ENCODE measurements at regions of chr15 and their contacts with region 1.

Region 1: DNA sequence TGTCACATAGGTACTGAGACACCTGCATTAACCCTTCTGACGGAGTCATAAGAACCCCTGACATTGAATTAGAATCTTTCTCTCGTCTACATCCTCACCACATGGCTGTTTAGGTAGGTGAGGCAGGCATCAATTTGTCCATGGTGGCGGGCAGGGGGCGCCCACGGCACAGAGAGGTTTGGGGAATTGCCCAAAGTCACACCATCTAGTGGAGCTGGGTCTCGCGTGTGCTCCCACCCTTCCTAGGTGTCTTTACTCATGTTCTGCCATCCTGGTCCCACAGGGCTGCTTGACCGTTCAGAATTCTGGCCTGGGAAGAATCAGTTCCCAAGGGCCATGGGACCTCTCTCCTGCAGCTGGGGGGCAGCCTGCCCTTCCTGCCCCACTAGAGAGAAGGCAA is 14.7 kb upstream of the DLL4 start:
- DNase-seq: no peak
- H3K4me3 ChIP-seq: no peak overlapping the region
- CTCF ChIP-seq: no peak

Region 2: DNA sequence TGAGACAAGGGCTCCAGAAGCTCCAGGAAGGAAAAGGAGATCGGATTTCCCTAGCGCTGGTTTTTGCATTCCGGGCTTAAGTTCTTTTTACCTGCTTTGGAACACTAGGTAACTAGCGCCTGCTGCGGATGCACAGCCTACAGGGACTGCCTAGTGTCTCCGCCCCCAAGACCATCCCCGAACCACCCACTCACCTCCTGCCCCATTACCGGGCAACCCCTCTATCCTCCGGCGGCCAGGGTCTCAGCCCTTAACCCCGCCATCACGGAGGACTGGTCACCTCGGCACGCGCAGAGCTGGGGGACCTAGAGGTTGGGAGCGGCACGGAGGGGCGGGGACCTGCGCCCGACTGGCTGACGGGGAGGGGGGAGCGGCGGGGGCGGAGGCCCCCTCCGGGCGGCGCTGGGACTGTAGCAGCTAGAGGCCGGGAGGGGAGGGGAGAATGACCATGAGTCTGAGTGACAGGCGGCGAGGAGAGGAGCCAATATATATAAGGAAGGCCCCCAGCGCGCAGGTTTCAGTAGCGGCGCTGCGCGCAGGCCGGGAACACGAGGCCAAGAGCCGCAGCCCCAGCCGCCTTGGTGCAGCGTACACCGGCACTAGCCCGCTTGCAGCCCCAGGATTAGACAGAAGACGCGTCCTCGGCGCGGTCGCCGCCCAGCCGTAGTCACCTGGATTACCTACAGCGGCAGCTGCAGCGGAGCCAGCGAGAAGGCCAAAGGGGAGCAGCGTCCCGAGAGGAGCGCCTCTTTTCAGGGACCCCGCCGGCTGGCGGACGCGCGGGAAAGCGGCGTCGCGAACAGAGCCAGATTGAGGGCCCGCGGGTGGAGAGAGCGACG is 14.6 kb after region 1 on chr15 and contains the start of gene DLL4:
- CTCF ChIA-PET with region 1: interaction called, 109 read pairs
- POLR2A ChIA-PET with region 1: no interaction called
- DNase-seq: no peak
- H3K4me3 ChIP-seq: peak within 1 kb of the TSS; percentile 48
- CTCF ChIP-seq: no peak